ENCODE measurements at regions of chr3 and their contacts with region 1.

Region 1: GRCh38 chr3:30199096-30199759 is 407.2 kb upstream of the TGFBR2 start:
- DNase-seq: peak; percentile 65
- ATAC-seq: peak; percentile 43
- H3K4me3 ChIP-seq: no peak overlapping the region
- H3K4me3 Mint-ChIP-seq: no peak overlapping the region
- H3K27ac ChIP-seq: no peak overlapping the region
- H3K27ac Mint-ChIP-seq: no peak overlapping the region
- H3K4me1 ChIP-seq: peaks cover 0 to 3% of the 10 kb centered on the region in 2 donors
- H3K4me1 Mint-ChIP-seq: peaks cover 15% of the 10 kb centered on the region
- H3K27me3 ChIP-seq: no peaks in the 10 kb centered on the region
- H3K27me3 Mint-ChIP-seq: no peaks in the 10 kb centered on the region
- CTCF ChIP-seq: peak; percentile 96

Region 2: DNA sequence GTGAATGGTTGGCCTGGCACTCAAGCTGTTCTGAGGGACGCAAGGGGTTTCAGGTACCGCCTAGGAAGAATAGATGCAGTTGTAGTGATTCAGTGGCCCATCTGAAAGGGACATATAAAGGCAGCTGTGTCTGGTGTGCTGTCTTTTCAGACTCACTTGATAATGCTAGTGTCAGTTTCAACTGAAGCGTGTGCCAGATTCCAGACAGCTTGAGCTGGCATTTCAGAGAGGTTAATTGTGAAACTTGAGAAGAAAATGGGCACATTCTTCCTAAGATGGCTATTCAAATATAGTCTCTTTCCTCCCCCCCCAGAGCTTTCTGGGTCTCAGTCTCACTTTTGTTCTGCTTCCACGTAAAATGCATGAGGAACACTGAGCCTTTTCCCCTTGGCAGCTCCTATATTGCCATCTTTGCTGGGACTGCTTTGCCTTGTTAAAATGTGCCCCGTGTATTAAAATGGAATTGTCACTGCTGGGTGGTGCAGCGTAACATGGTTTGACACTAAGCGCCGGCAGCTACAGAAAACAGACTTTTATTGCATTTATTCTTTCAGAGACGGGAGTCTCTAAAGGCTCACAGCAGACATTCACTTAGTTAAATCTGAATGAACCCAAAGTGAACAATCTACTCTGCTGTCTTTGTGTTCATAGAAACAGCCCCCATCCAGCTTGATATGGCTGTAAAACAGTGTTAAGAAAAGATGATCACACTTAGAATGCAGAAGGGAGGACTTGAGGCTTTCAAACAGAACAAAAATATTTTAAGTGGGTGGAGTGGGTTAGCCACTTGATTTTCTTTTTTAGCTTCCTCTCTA is 439.6 kb before region 1 on chr3:
- CTCF ChIA-PET with region 1: no interaction called
- POLR2A ChIA-PET with region 1: no interaction called
- intact Hi-C with region 1: no loop called
- DNase-seq: no peak
- ATAC-seq: no peak
- H3K4me3 ChIP-seq: no peak overlapping the region
- H3K4me3 Mint-ChIP-seq: no peak overlapping the region
- H3K27ac ChIP-seq: no peak overlapping the region
- H3K27ac Mint-ChIP-seq: no peak overlapping the region
- H3K4me1 ChIP-seq: no peaks in the 10 kb centered on the region
- H3K4me1 Mint-ChIP-seq: no peaks in the 10 kb centered on the region
- H3K27me3 ChIP-seq: no peaks in the 10 kb centered on the region
- H3K27me3 Mint-ChIP-seq: no peaks in the 10 kb centered on the region
- CTCF ChIP-seq: no peak

Region 3: DNA sequence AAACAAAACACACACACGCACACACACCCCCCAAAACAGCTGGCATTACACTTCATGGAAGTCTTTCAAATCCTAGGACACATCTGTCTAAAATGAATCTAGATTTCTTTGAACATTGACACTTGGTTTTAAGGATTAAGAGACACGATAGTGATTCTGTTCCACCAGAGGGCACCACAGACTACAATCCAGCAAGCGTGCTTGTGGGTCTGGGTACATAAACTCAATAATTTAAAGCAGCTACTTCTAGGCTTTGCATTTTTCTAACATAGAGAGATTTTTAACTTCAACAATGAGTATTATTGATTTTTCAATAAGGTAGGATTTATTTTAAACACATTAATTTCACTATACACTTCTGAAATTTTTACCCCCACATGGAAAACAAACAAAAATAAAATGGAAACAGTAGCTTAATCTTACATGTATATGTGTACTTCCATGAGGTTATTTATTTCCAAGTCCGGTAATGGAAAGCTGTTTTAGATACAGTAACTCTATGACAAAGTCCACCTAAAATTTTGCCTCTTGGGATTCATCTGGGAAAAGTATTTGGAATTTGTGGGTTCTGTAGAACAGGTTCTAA is 156.9 kb before region 1 on chr3:
- CTCF ChIA-PET with region 1: interaction called, 46 read pairs
- POLR2A ChIA-PET with region 1: no interaction called
- intact Hi-C with region 1: loop called (anchors 1 kb)
- DNase-seq: peak; percentile 65
- ATAC-seq: peak; percentile 33
- H3K4me3 ChIP-seq: no peak overlapping the region
- H3K4me3 Mint-ChIP-seq: no peak overlapping the region
- H3K27ac ChIP-seq: no peak overlapping the region
- H3K27ac Mint-ChIP-seq: no peak overlapping the region
- H3K4me1 ChIP-seq: no peaks in the 10 kb centered on the region
- H3K4me1 Mint-ChIP-seq: peaks cover 2% of the 10 kb centered on the region
- H3K27me3 ChIP-seq: no peaks in the 10 kb centered on the region
- H3K27me3 Mint-ChIP-seq: peaks cover 14% of the 10 kb centered on the region
- CTCF ChIP-seq: peak; percentile 85

Region 4: GRCh38 chr3:30180310-30181177 is 18.7 kb before region 1 on chr3:
- CTCF ChIA-PET with region 1: interaction called, 27 read pairs
- POLR2A ChIA-PET with region 1: no interaction called
- intact Hi-C with region 1: no loop called
- DNase-seq: no peak
- ATAC-seq: no peak
- H3K4me3 ChIP-seq: no peak overlapping the region
- H3K4me3 Mint-ChIP-seq: no peak overlapping the region
- H3K27ac ChIP-seq: no peak overlapping the region
- H3K27ac Mint-ChIP-seq: no peak overlapping the region
- H3K4me1 ChIP-seq: no peaks in the 10 kb centered on the region
- H3K4me1 Mint-ChIP-seq: peaks cover 2% of the 10 kb centered on the region
- H3K27me3 ChIP-seq: peaks cover 0 to 3% (median 0%) of the 10 kb centered on the region in 4 experiments
- H3K27me3 Mint-ChIP-seq: peaks cover 14% of the 10 kb centered on the region
- CTCF ChIP-seq: no peak

Region 5: DNA sequence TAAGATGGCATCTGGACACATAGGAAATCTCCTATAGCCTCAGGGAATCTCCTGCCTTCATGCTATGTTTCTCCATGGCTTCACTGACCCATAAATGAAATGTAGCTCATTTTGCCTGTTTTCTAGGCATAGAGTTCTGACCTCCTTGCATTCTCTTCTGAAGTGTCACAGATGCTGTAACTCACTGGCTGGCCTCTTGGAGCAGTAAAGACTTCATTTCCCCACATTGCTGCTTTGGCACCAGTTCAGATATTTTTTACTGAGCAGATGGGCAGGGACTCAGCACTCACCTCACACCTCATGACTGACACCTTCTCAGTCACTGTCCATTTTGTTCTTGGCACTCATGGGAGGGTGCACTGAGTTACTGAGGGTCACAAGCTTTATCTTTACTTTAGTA is 120.5 kb after region 1 on chr3:
- CTCF ChIA-PET with region 1: interaction called, 15 read pairs
- POLR2A ChIA-PET with region 1: no interaction called
- intact Hi-C with region 1: no loop called
- DNase-seq: peak; percentile 68
- ATAC-seq: peak; percentile 92
- H3K4me3 ChIP-seq: no peak overlapping the region
- H3K4me3 Mint-ChIP-seq: no peak overlapping the region
- H3K27ac ChIP-seq: no peak overlapping the region
- H3K27ac Mint-ChIP-seq: no peak overlapping the region
- H3K4me1 ChIP-seq: peaks cover 5% of the 10 kb centered on the region in 2 donors
- H3K4me1 Mint-ChIP-seq: peaks cover 4% of the 10 kb centered on the region
- H3K27me3 ChIP-seq: no peaks in the 10 kb centered on the region
- H3K27me3 Mint-ChIP-seq: no peaks in the 10 kb centered on the region
- CTCF ChIP-seq: peak; percentile 77

Measured in B cell (primary cell).